Psoas muscle (tissue), 8 donors: ENCODE measurements at regions of chr22 and their contacts with region 1.

Region 1: DNA sequence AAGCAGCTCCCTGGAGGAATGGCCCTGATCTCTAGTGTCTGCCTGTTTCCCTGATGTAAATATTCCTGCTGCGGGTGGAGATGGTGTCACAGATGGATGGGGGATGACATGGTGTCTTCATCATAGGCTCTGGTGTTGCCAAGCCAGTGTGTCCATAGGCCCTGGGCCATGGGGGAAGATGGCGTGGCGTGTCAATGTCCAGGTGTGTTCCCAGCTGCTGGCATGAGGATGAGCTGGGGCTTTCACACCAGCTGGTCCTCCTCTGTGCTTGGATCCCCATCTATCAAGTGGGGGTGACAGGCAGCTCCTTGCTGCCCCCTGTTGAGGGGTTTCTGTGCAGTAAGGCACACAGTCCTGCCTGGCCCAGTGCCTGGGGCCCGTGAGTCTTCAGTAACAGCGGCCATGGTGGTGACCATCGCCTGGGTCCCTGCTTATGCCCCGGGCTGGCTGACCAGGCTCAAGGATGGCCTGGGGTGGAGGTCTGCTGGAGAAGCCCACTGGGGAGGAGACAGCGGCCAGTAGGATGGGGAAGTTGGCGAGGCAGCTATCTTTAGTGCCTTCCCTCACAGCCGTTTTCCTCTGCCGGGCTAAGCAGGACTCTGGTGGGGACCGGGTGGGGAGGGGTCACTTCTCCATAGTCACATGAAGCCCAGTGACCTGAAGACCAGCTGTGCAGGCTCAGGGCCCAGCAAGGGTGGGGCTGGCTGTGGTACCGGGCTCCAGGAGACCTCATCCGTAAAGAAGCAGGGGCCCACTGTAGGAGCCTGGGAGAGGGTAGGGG is 12.7 kb downstream of the RPL3 start:
- DNase-seq: no peak
- ATAC-seq: peak in 1 of 4 donors; percentile 46
- H3K4me3 ChIP-seq: no peak overlapping the region
- H3K27ac ChIP-seq: no peak overlapping the region
- H3K4me1 ChIP-seq: peaks cover 11% of the 10 kb centered on the region
- H3K27me3 ChIP-seq: no peaks in the 10 kb centered on the region
- CTCF ChIP-seq: peak; percentile 23

Region 2: GRCh38 chr22:39110631-39111561 is 195.9 kb before region 1 on chr22:
- intact Hi-C with region 1: no loop called
- DNase-seq: peak in 1 of 2 donors; percentile 16
- ATAC-seq: no peak
- H3K4me3 ChIP-seq: no peak overlapping the region
- H3K27ac ChIP-seq: no peak overlapping the region
- H3K4me1 ChIP-seq: no peaks in the 10 kb centered on the region
- H3K27me3 ChIP-seq: peaks cover 0 to 61% (median 5%) of the 10 kb centered on the region in 3 donors
- CTCF ChIP-seq: no peak

Region 3: DNA sequence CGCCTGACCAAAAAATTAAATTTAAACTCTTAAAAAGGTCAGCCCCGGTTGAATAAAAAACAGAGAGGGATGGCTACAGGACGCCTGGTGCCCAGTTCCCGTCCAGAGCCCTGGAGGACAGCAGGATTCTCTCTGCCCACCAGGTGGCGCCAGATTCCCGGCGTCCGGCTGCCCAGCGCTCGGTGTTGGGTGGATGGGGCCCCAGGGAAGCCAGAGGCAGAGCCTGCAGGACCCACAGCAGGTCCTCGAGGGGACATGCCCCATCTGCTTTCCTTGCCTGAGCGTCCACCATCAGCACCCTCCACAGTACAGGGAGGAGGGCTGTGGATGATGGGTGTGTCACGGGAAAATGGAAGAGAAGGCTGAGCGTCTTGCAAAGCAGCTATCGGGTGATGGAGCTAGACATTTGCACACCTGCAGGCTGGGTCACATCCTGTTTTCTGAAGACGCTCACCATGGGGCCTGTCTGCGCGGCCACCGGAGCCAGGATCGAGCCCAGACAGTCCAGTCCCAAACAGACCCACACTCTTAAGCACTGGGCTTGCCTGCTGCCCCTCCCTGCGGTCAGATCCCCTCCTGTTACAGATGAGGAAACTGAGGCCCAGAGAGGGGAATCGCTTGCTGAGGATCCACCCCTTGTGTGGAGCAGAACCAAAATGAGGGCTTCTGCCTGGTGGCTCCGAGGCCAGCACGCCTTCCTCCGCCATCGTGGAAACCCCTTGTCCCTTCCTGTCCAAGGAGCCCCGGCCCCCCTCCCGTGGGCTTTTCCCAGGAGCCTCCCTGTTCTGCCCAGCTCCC is 135.7 kb before region 1 on chr22:
- intact Hi-C with region 1: loop called in 1 of 2 experiments (anchors 2 kb)
- DNase-seq: peak; percentile 87 to 93
- ATAC-seq: peak; percentile 87 to 95 (median 90)
- H3K4me3 ChIP-seq: no peak overlapping the region
- H3K27ac ChIP-seq: no peak overlapping the region
- H3K4me1 ChIP-seq: peaks cover 47% of the 10 kb centered on the region
- H3K27me3 ChIP-seq: no peaks in the 10 kb centered on the region
- CTCF ChIP-seq: peak; percentile 96

Region 4: DNA sequence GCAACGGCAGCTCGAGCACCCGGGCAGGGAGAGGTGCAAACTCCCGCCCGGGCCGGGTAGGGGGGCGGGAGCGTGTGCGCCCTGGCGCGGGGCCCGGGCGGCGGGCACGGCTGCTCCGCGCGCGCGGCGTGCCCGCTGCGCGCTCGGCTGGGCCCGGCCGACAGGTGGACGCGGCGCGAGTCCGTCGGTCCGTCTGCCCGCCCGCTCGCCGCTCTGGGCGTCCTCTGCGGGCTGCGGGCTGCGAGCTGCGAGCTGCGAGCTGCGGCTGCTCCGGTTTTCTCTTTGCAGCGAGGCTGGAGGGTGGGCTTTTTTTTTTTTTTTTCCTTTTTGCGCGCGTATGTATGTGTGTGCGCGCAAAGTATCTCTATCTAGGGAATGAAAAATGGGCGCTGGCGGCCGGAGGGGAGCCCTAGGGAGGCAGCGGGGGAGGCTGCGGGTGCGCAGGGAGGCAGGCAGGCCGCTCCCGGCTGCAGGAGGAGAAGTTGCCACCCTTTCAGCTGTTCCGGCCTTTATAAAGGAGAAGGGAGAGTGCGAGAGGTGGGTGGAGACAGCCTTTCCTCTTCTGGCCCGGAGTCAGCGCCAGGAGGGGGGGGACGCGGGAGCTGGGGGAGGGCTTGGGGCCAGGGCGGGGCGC is 62.2 kb before region 1 on chr22 and contains the start of gene PDGFB:
- intact Hi-C with region 1: loop called (anchors 5 kb)
- DNase-seq: peak in 1 of 2 donors; percentile 68
- ATAC-seq: peak; percentile 25 to 41 (median 38)
- H3K4me3 ChIP-seq: peak within 1 kb of the TSS; percentile 73
- H3K27ac ChIP-seq: peak within 1 kb of the TSS; percentile 87
- H3K4me1 ChIP-seq: peaks cover 47% of the 10 kb centered on the region
- H3K27me3 ChIP-seq: no peaks in the 10 kb centered on the region
- CTCF ChIP-seq: no peak
- total RNA-seq, gene PDGFB: 7.5 to 16.4 (median 14.0) TPM